A673 (cell line): ENCODE measurements at regions of chr10 and their contacts with region 1.

Region 1: GRCh38 chr10:49164559-49165188 is 23.5 kb downstream of the TMEM273 start:
- DNase-seq: peak; percentile 47
- H3K4me3 ChIP-seq: no peak overlapping the region
- H3K27ac ChIP-seq: no peak overlapping the region
- H3K4me1 ChIP-seq: no peaks in the 10 kb centered on the region
- H3K27me3 ChIP-seq: peaks cover 1% of the 10 kb centered on the region
- CTCF ChIP-seq: peak; percentile 70

Region 2: GRCh38 chr10:48885383-48885782 is 279.3 kb before region 1 on chr10:
- CTCF ChIA-PET with region 1: no interaction called
- POLR2A ChIA-PET with region 1: no interaction called
- intact Hi-C with region 1: loop called (anchors 10 kb)
- DNase-seq: no peak
- H3K4me3 ChIP-seq: no peak overlapping the region
- H3K27ac ChIP-seq: no peak overlapping the region
- H3K4me1 ChIP-seq: no peaks in the 10 kb centered on the region
- H3K27me3 ChIP-seq: no peaks in the 10 kb centered on the region
- CTCF ChIP-seq: peak; percentile 39; the same call in 1 of the 2 replicates

Region 3: DNA sequence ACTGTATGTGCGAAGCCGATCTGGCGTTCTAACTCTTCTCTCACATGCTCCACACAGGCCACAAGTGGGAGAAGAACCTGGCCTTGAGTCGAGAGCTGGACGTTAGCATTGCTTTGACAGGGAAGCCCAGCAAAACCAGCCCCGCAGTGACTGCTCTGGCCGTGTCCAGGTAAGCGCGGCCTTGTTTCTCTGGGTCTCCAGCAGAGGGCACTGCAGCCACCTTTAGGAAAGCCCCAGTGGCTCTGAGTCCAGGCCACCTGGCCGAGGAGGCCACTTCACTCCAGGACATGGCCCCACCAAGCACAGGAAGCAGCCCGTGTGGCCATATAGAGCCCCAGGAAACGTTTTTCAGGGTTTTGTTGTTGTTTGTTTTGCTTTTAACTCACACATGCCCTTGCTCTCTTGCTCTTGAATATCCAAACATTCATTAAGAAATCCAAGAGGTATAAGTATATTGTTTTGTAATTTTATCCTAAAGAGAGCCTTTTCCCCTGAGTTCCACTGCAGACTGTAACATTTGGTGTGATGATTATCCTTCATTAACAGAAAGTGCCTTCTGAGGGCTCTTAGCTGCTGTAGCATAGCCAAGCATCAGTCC is 183.3 kb before region 1 on chr10:
- CTCF ChIA-PET with region 1: no interaction called
- POLR2A ChIA-PET with region 1: no interaction called
- intact Hi-C with region 1: loop called (anchors 10 kb)
- DNase-seq: peak; percentile 15
- H3K4me3 ChIP-seq: no peak overlapping the region
- H3K27ac ChIP-seq: no peak overlapping the region
- H3K4me1 ChIP-seq: no peaks in the 10 kb centered on the region
- H3K27me3 ChIP-seq: peaks cover 5% of the 10 kb centered on the region
- CTCF ChIP-seq: peak; percentile 75

Region 4: DNA sequence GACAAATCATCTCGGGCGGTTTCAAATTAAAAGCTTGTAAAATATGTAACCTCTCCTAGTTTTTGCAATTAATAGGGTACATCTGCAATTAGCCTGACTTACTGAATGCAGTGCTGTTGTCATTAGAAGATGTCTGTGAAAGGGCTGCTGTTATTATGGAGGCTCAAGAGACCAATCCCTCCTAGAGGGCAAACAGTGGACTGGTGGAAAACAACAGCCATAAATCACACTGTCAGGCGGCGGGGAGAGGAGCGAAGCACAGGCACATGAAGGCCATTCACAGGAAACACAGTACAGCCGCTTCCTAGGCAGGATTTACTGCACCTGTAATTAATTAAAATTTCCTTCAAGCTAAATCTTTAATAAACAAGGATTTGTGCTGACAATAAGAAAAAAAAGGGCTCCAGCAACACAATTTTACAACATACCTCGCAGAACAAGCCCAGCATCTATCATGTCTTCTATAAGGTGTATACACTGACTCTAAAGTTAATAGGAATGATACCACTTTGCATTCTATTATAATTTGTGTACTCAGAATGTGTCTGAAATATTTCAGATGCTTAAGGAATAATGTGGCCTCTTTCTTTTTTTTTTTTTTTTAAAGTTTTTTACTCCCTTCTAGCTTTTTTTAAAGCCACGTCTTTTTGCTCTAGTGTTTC is 323.5 kb after region 1 on chr10:
- CTCF ChIA-PET with region 1: no interaction called
- POLR2A ChIA-PET with region 1: no interaction called
- intact Hi-C with region 1: no loop called
- DNase-seq: no peak
- H3K4me3 ChIP-seq: no peak overlapping the region
- H3K27ac ChIP-seq: no peak overlapping the region
- H3K4me1 ChIP-seq: no peaks in the 10 kb centered on the region
- H3K27me3 ChIP-seq: no peaks in the 10 kb centered on the region
- CTCF ChIP-seq: no peak